ENCODE measurements at regions of chr19 and their contacts with region 1.

Region 1: DNA sequence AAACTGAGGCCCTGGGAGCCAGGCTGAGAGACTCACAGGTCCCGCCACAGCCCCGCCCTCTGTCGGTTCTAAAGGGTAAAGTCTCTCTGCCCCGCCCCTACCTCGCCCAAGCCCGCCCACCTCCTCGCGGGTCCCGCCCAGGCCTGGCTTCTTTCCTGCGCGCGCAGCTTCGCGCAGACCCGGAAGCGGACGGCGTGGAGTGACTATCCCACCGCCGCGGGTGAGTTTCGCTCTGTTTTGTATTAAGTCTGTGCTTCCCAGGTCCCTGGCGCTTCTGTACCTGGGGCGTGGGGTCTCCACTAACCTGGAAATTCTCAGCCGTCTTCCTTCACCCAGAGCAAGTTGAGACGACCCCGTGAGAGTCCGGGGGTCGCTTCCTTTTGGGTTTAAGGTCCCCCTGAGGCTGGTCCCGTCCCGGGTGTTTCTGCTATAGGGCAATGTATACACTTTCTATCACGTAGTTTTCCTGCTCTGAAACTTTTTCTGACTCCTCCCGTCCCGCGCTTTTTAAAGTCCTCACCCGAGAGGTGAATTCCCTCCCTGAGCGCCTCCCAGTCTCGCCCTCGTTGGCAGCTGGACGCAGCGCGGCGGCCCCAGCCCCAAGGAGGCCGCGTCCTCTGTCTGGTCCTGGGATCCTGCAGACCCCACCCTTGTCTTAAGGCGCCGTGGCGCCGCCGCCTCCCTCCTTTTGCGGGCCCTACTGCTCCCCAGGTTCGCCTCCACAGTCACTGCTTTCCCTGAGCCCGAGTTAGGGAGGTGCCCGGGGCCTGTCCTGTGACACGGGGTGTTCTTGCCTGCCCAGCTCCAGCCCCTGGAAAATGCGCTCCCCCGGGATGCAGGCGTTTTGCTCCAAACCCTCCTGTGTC is at the start of gene ZNF765:
- DNase-seq: peak; percentile 99
- total RNA-seq, gene ZNF765: 9.3 to 10.6 TPM

Region 2: GRCh38 chr19:53333463-53334449 is 61.5 kb before region 1 on chr19 and contains the start of gene ZNF845:
- intact Hi-C with region 1: no loop called
- DNase-seq: peak; percentile 99
- total RNA-seq, gene ZNF845: 6.6 to 6.7 TPM

Region 3: DNA sequence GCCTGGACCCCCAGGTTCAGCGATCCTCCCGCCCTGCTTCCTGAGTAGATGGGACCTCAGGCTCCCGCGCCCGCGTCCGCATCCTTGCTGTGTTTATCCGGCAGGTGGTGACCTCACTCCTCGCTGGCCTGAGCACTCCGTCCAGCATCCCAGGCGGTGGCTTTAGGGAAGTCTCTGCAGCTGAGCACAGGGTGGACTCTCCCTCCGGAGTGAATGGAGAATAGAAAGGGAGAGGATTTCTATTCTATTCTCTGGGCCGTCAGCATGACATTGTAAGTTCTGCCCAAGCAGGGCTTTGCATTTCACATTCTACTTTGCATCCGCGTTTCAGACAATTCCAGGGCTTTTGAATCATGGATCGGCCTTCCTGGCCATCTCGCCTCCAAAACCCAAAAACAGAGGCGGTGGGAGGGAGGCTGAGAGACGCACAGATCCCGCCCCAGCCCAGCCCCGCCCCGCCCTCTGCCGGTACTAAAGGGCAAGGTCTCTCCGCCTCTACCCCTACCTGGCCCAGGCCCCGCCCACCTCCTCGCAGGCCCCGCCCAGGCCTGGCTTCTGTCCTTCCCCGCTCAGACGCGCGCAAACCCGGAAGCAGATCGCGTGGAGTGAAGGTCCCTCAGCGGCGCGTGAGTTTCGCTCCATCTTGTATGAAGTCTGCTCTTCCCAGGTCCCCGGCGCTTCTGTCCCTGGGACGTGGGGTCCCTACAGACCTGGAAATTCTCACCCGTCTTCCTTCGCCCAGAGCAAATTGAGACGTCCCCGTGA is 29.9 kb before region 1 on chr19 and contains the start of gene ZNF525:
- intact Hi-C with region 1: loop called in 1 of 2 experiments (anchors 2 kb)
- DNase-seq: peak; percentile 96
- total RNA-seq, gene ZNF525: 10.7 to 13.5 TPM

Measured in posterior vena cava (tissue), 2 donors.